ENCODE measurements at regions of chr1 and their contacts with region 1.

Region 1: GRCh38 chr1:6137758-6138157 is 42.4 kb downstream of the CHD5 start:
- DNase-seq: no peak

Region 2: DNA sequence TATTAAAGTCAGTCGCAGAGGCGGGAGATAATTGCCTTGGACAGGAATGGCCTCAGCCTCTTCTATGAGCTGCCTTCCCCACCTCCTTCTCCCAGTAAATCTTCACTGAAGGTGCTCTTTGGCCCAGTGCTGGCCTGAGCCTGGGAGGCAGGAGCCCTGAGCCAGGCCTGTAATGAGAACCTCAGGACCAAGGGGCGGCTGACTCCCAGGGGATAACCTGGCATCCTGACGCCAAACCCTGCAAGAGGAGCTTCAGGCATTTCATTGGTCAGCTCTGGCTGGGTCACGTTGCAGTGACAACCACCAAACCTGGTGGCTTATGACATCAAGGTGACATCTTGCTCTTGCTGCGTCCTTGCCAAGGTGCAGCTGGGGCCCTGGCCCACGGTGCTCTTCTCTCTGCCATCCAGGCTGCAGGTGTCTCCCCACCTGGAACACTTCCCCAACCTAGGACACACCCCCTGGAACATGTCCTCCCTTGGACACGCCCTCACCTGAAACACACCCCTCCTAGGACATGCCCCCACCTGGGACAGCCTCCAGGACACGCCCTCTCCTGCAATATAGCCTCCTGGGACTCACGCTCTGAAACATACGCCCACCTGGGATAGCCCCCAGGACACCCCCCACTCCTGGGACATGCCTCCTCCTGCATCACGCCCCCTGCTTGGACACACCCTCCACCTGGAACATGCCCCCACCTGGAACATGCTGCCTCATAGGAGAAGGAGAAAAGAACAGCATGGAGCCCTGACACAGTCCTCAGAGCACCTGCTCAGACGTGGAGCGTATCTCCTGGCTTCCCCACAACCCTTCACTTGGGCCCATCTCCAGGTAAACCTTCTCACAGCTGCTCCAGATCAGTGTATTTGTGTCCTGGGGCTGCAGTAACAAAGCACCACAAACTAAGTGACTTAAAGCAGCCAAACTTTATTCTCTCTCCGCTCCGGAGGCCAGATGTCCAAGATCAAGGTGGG is 479.1 kb before region 1 on chr1:
- intact Hi-C with region 1: loop called in 1 of 2 experiments (anchors 5 kb)
- DNase-seq: no peak

Region 3: GRCh38 chr1:5881526-5882222 is 256.1 kb before region 1 on chr1:
- intact Hi-C with region 1: loop called in 1 of 2 experiments (anchors 5 kb)
- DNase-seq: no peak

Region 4: GRCh38 chr1:6041432-6042062 is 96.2 kb before region 1 on chr1:
- intact Hi-C with region 1: no loop called
- DNase-seq: no peak

Region 5: GRCh38 chr1:6116137-6116536 is 21.6 kb before region 1 on chr1:
- intact Hi-C with region 1: no loop called
- DNase-seq: no peak